Panc1 (cell line): ENCODE measurements at regions of chr11 and their contacts with region 1.

Region 1: DNA sequence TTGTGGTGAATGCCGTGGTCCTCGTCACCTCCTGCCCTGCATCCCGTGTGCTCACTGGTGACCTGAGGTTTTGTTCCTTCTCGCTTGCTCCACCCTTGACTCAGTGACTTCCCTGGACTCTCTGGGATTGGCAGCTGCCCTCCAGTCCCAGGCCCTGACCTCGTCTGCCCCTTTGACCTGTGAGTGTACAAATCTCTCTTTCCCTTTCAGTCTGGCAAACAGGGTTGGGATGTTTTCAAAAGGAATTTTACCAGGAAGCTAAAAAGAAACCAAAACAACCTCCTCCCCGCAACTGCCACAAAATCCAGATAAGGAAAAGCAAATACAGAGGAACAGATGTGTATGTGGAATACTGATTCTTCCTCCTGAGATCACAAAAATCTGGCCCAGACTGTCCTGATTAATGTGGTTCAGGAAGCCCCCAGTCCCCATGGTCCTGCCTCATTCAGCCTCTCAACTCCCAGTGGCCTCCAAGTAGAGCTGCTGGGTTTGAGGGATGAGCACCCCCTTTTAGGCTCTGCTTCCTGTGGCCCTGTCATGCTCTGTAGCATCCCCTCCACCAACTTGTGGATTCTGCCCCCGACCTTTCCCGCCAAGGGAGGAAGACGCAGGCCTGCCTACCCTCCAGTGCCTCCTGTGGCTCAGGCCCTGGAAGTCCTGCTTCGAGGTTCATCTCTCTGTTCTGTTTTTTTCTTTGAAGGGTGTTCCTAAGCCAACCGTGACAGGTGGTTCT is 15.2 kb downstream of the ROBO4 start:
- DNase-seq: no peak
- ATAC-seq: no peak; the same call in 1 of the 2 replicates
- H3K4me3 ChIP-seq: no peak overlapping the region
- H3K27ac ChIP-seq: no peak overlapping the region
- H3K4me1 ChIP-seq: peaks cover 3% of the 10 kb centered on the region; the same call in 1 of the 2 replicates
- H3K27me3 ChIP-seq: no peaks in the 10 kb centered on the region; the same call in 1 of the 2 replicates
- CTCF ChIP-seq: no peak

Region 2: DNA sequence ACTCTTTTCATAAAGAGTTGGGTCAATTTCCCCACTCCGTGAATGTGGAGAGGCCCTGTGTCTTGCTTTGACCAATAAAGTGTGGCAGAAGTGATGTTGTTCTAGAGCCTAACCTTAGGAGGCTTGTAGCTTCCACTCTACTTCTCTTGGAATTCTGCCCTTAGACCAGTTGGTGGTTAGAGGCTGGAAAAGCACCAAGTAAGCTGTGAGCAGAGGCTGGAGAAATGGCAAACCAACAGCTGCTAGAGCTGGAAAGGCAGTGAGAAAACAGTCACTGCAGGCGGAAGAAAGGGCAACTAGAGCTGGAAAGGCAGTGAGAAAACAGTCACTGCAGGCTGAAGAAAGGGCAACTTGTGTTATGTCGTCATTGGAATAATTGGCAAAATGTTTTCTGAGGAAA is 52.5 kb before region 1 on chr11:
- CTCF ChIA-PET with region 1: interaction called, 15 read pairs
- POLR2A ChIA-PET with region 1: no interaction called
- in situ Hi-C with region 1: no loop called
- intact Hi-C with region 1: no loop called
- DNase-seq: no peak
- ATAC-seq: no peak
- H3K4me3 ChIP-seq: no peak overlapping the region
- H3K27ac ChIP-seq: no peak overlapping the region
- H3K4me1 ChIP-seq: no peaks in the 10 kb centered on the region
- H3K27me3 ChIP-seq: peaks cover 13% of the 10 kb centered on the region
- CTCF ChIP-seq: no peak

Region 3: DNA sequence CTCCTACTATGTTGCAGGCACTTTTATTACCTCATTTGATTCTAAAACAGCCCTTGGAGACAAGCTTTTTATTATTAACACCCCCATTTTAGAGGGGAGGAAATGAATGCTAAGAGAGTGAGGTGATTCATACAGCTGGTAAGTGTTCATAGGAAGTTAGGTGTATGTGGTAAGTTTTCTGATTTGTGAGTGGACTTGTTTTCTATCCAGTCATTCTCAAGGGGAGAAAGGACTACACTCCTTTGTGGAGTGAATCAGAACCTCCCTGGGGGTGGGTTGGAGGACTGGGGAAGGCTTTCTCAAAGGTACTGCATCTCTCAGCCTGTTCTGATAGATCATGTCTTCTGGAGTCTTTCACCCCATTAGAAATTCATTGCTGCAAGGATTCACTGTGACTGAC is 305.5 kb after region 1 on chr11:
- CTCF ChIA-PET with region 1: no interaction called
- POLR2A ChIA-PET with region 1: no interaction called
- in situ Hi-C with region 1: no loop called
- intact Hi-C with region 1: no loop called
- DNase-seq: no peak
- ATAC-seq: no peak
- H3K4me3 ChIP-seq: no peak overlapping the region
- H3K27ac ChIP-seq: no peak overlapping the region
- H3K4me1 ChIP-seq: no peaks in the 10 kb centered on the region
- H3K27me3 ChIP-seq: peaks cover 39% of the 10 kb centered on the region
- CTCF ChIP-seq: no peak

Region 4: DNA sequence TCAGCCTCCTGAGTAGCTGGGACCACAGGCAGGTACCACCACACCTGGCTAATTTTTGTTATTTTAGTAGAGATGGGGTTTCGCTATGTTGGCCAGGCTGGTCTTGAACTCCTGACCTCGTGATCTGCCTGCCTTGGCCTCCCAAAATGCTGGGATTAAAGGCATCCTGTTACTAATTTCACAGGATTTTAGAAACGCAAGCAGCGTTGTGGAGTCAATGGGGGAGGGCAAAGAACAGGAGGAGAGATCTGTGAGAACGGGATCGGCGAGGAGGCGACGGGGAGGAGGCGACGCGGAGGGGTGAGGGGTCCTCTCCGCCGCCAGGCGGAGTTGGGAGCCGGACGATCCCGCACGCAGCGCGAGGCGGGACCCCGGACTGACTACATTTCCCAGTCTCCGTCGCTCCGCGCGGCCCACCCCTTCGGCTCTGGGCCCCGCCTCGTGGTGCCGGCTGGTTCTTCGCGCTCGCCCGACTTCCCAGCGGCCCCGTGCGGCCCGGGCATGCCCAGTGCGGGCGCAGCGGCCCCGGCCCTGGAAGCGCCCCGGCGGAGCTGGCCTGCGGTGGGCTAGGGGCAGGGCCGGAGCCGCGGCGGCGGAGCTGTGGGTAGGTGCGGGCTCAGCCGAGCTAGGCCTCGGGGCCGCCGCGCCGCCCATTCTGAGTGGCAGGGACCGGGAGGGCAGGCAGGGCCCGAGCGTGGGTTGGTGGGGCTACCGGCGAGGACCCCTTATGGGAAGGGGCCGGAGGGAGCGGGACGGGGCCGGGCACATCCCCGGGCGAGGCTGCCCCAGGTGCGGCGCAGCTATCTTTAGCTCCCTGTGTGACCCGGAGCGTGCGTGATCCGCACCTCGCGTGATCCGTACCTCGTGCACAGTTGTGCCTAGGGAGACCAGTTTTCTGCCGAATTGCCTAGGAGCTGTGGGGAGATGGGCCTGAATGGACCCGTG is 686.7 kb after region 1 on chr11 and contains the start of gene EI24:
- CTCF ChIA-PET with region 1: no interaction called
- POLR2A ChIA-PET with region 1: no interaction called
- in situ Hi-C with region 1: no loop called
- intact Hi-C with region 1: no loop called
- DNase-seq: peak; percentile 77
- ATAC-seq: peak; percentile 100
- H3K4me3 ChIP-seq: peak within 1 kb of the TSS; percentile 87 to 98
- H3K27ac ChIP-seq: peak within 1 kb of the TSS; percentile 96
- H3K4me1 ChIP-seq: peaks cover 12% of the 10 kb centered on the region
- H3K27me3 ChIP-seq: no peaks in the 10 kb centered on the region
- CTCF ChIP-seq: peak; percentile 87
- total RNA-seq, gene EI24: 193 TPM